ENCODE measurements at regions of chr1 and their contacts with region 1.

Region 1: DNA sequence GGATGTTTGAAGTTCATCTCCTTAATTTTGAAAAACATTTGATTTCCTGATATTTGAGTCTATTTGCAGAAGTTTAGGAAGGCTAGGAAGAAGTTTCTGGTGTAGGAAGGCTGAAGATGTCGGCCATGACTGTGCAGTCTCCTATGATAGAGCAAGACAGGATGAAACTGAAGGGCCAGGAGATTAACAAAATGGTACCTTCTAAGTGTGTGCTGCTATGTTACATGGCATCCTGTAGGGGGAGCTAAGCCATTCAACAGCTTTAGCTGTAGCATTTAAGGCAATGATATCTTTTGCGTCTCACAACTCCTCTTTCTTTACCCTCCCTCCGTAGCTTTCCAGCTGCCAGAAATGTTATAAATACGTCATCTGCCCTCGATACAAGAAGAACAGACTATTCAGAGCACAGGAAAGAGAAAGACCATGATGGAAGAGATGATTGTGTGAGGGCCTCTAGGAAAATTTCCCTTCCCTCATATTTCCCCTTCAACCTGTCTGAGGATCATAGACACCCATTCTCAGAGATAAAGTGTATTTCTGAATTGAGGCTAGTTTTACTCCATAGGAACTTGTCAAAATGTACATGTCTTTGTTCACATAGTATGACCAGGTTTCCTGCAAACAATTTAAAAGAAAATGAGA is 61.1 kb downstream of the XCL1 start:
- DNase-seq: no peak
- ATAC-seq: peak; percentile 79 to 85 (median 82)
- H3K4me3 ChIP-seq: peak overlapping the region; percentile 15
- H3K27ac ChIP-seq: peak overlapping the region; percentile 94
- H3K4me1 ChIP-seq: peaks cover 15% of the 10 kb centered on the region
- H3K27me3 ChIP-seq: no peaks in the 10 kb centered on the region
- CTCF ChIP-seq: peak; percentile 76

Region 2: DNA sequence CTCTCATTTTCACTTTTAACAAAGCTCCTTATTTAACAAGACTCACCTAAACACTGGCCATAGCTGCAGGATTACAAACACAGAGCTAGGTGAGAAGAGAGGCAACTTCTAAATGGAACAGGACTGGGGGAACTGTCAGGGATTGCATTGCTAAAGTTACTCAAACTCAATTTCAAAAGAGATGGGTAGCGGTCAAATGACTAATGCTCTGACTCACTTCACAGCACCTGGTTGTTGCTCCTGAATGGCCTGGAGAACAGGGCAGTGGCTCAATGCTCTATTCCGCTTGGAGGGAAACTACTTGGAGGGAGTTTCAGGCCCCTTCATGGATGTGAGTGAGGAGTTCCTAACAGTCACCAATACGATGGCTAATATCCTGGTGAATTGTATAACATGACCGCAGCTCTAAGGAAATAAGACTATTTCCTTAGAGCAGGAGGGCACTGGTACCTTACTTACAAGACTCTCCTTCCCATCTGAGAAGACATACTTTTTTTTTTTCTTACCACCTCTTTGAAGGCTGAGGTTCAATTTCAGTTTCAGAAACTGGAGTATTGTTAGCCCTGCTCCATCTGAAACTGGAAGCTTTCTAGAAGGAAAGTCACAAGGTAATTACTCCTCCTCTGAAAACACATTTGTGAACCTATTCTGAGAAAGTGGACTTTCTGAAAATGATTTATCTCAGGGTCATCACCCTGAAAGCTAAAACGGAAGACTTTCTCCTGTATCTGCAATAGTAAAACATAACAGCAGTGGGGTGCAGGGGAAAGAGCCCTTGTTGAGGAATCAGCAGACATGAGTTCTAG is 82.0 kb after region 1 on chr1:
- intact Hi-C with region 1: loop called in 1 of 2 experiments (anchors 2 kb)
- DNase-seq: no peak
- ATAC-seq: peak; percentile 82 to 95 (median 92)
- H3K4me3 ChIP-seq: no peak overlapping the region
- H3K27ac ChIP-seq: peak overlapping the region; percentile 56
- H3K4me1 ChIP-seq: peaks cover 18% of the 10 kb centered on the region
- H3K27me3 ChIP-seq: no peaks in the 10 kb centered on the region
- CTCF ChIP-seq: no peak

Region 3: GRCh38 chr1:168811176-168811575 is 173.7 kb after region 1 on chr1:
- intact Hi-C with region 1: no loop called
- DNase-seq: no peak
- ATAC-seq: peak in 1 of 4 donors; percentile 37
- H3K4me3 ChIP-seq: no peak overlapping the region
- H3K27ac ChIP-seq: no peak overlapping the region
- H3K4me1 ChIP-seq: no peaks in the 10 kb centered on the region
- H3K27me3 ChIP-seq: no peaks in the 10 kb centered on the region
- CTCF ChIP-seq: no peak

Region 4: DNA sequence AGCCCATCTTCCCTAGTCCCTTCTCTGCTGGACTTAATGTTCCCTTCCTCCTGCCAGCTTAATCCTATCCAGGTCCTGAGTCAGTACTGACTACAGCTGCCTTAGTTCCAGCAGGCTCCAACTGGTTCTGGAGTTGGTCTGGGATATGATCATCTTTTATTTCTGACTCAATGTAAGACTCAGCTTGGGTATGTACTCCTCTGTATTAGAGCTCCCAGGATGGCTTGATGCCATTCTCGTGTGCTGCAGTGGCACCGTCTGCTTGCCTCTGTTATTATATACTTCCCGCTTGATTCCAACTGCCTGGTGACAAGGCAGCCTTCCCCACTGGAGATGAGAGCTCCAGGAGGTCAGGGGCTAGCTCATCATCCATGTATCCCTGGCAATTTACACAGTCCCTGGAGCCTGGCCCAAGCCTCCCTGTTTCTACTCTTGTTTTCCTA is 255.9 kb after region 1 on chr1:
- intact Hi-C with region 1: loop called (anchors 5 kb)
- DNase-seq: peak; percentile 60 to 84
- ATAC-seq: peak; percentile 96 to 98 (median 97)
- H3K4me3 ChIP-seq: peak overlapping the region; percentile 37
- H3K27ac ChIP-seq: peak overlapping the region; percentile 84
- H3K4me1 ChIP-seq: peaks cover 12% of the 10 kb centered on the region
- H3K27me3 ChIP-seq: no peaks in the 10 kb centered on the region
- CTCF ChIP-seq: no peak

Region 5: DNA sequence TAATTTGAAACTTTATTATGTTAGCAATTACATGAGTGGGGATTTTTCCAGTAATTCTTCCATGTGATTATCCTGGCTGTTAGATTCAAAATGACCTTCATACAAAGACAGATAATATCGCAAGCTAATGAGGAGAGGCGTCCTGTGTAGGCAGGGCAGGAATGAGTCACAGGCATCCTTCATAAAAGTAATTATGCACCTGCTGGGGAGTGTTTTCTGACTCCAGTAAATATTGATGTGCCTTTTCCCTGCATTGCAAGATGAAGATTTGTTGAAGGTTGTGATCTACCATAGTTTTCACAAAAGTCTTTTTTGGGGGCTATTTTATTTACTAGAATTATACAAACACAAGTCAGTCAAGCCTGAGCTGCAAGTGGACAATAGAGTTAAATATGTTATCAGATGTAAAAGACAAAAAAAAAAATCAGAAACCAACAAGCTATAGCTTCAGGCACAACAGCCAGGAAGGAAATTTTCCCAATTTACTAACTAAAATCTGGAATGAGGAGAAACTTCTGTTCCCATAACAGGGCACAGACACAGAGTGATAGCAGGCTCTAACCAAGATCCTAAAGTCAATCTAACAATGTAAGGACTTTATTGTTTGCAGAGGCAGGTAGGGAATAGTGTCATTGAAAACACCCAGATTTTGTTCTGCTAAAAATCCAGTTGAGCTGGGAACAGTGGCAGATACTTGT is 302.2 kb after region 1 on chr1:
- intact Hi-C with region 1: no loop called
- DNase-seq: no peak
- ATAC-seq: peak in 2 of 4 donors; percentile 44 to 53
- H3K4me3 ChIP-seq: no peak overlapping the region
- H3K27ac ChIP-seq: no peak overlapping the region
- H3K4me1 ChIP-seq: no peaks in the 10 kb centered on the region
- H3K27me3 ChIP-seq: no peaks in the 10 kb centered on the region
- CTCF ChIP-seq: no peak

Region 6: DNA sequence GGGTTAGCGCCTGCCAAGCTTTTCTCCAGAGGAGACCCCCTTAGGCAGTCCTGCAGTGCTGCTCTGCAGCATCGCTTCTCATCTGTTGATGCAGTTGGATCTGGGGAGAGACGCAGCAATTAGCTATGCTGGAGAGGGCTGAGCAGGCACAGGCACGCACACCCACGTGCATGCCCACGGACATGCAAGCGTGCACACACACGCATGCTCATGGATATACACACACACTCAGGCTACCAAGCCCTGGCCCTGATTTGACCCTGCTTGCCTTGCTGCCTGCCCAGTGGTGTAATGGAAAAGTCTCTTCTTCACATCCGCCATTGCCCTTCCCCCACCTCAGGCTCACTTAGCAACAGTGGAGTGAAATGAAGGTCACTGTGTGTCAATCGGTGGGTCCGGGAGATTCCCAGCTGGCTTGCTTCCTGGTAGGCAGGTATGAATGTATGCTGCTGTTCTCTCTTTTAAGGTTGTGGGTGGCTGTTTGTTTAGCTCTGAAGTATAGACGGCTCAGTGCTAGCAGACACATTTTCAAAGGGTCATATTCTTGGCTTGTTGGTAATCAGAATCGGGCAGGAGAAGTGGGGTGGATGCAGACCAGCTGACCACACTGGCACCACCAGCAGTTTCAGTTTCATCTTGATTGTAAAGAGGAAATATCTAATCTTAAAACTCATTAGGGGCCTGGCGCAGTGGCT is 478.6 kb after region 1 on chr1:
- intact Hi-C with region 1: loop called in 1 of 2 experiments (anchors 2 kb)
- DNase-seq: peak; percentile 44 to 77
- ATAC-seq: peak; percentile 14 to 39 (median 23)
- H3K4me3 ChIP-seq: peak overlapping the region; percentile 100
- H3K27ac ChIP-seq: peak overlapping the region; percentile 96
- H3K4me1 ChIP-seq: peaks cover 76% of the 10 kb centered on the region
- H3K27me3 ChIP-seq: no peaks in the 10 kb centered on the region
- CTCF ChIP-seq: no peak

Measured in psoas muscle (tissue), 8 donors.